A549 (cell line): ENCODE measurements at regions of chr1 and their contacts with region 1.

Region 1: GRCh38 chr1:245045087-245045881 is 109.5 kb upstream of the KIF26B start:
- DNase-seq: peak in 1 of 2 experiments; percentile 85
- ATAC-seq: peak; percentile 81 to 93
- H3K4me3 ChIP-seq: no peak overlapping the region
- H3K27ac ChIP-seq: peak overlapping the region in 1 of 2 experiments; percentile 18; a peak in 2 of 6 replicates
- H3K4me1 ChIP-seq: peaks cover 22% of the 10 kb centered on the region
- CTCF ChIP-seq: no peak
- EP300 ChIP-seq: no peak
- POLR2A ChIP-seq: no peak
- RAD21 ChIP-seq: no peak

Region 2: GRCh38 chr1:244599937-244600350 is 445.3 kb before region 1 on chr1:
- CTCF ChIA-PET with region 1: interaction called, 20 read pairs
- POLR2A ChIA-PET with region 1: interaction called, 3 read pairs
- DNase-seq: peak; percentile 72 to 82
- ATAC-seq: peak; percentile 88 to 92
- H3K4me3 ChIP-seq: peak overlapping the region; percentile 12; the same call in 1 of the 3 replicates
- H3K27ac ChIP-seq: peak overlapping the region in 1 of 2 experiments; percentile 11; a peak in 1 of 6 replicates
- H3K4me1 ChIP-seq: peaks cover 12% of the 10 kb centered on the region
- CTCF ChIP-seq: no peak
- EP300 ChIP-seq: no peak
- POLR2A ChIP-seq: no peak
- RAD21 ChIP-seq: no peak

Region 3: DNA sequence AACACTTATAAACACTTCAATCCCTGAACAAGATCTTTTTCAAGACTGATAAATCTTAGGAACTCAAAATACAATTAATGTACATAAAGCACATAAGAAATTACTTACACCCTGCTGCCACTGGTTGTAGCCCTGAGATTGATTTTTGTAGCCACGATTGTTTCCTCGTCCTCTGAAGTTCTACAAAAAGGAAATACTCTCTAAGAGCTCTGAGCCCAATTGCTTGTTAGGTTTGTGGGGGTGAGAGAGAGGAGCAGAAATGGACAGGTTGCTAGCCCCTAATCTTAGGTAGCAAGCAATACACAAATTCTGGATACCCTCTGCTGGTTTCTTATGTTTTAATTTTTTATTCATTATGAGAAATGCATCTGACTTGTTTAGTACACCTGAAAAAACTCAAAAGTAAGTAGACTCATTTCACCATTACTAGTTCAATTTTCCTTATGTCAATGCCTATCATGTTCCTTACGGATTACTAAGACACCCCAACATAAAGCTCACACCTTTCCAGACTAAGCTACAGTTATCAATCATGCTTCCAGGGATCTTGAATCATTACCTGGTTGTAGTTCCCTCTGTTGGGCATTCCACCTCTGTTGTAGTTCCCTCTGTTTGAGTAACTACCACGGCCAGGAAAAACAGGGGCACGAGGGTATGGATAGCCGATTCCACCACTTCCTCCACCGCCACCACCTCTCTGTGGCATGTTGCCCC is 190.3 kb before region 1 on chr1:
- CTCF ChIA-PET with region 1: interaction called, 19 read pairs
- POLR2A ChIA-PET with region 1: interaction called, 4 read pairs
- DNase-seq: no peak
- ATAC-seq: peak in 1 of 2 experiments; percentile 10; a peak in 1 of 6 replicates
- H3K4me3 ChIP-seq: no peak overlapping the region
- H3K27ac ChIP-seq: no peak overlapping the region
- H3K4me1 ChIP-seq: peaks cover 52% of the 10 kb centered on the region
- CTCF ChIP-seq: no peak
- EP300 ChIP-seq: no peak
- POLR2A ChIP-seq: no peak
- RAD21 ChIP-seq: no peak

Region 4: GRCh38 chr1:244897476-244898254 is 147.6 kb before region 1 on chr1:
- CTCF ChIA-PET with region 1: interaction called, 11 read pairs
- POLR2A ChIA-PET with region 1: no interaction called
- DNase-seq: no peak
- ATAC-seq: no peak
- H3K4me3 ChIP-seq: no peak overlapping the region
- H3K27ac ChIP-seq: no peak overlapping the region; a peak in 1 of 6 replicates
- H3K4me1 ChIP-seq: peaks cover 13% of the 10 kb centered on the region
- CTCF ChIP-seq: no peak
- EP300 ChIP-seq: no peak
- POLR2A ChIP-seq: no peak
- RAD21 ChIP-seq: no peak

Region 5: GRCh38 chr1:245019910-245020486 is 25.3 kb before region 1 on chr1:
- CTCF ChIA-PET with region 1: interaction called, 14 read pairs
- POLR2A ChIA-PET with region 1: no interaction called
- DNase-seq: no peak
- ATAC-seq: 0 out of 6 replicates have a peak, but pooled peaks of 1 of the 2 experiments have one; percentile 39
- H3K4me3 ChIP-seq: no peak overlapping the region
- H3K27ac ChIP-seq: no peak overlapping the region
- H3K4me1 ChIP-seq: no peaks in the 10 kb centered on the region
- CTCF ChIP-seq: no peak
- EP300 ChIP-seq: no peak
- POLR2A ChIP-seq: no peak
- RAD21 ChIP-seq: no peak

Region 6: GRCh38 chr1:245060684-245061374 is 15.5 kb after region 1 on chr1:
- CTCF ChIA-PET with region 1: interaction called, 25 read pairs
- POLR2A ChIA-PET with region 1: no interaction called
- DNase-seq: peak in 1 of 2 experiments; percentile 46
- ATAC-seq: peak; percentile 24 to 67; a peak in 4 of 6 replicates
- H3K4me3 ChIP-seq: no peak overlapping the region
- H3K27ac ChIP-seq: no peak overlapping the region
- H3K4me1 ChIP-seq: peaks cover 14% of the 10 kb centered on the region; the same call in 2 of the 3 replicates
- CTCF ChIP-seq: no peak
- EP300 ChIP-seq: no peak
- POLR2A ChIP-seq: no peak
- RAD21 ChIP-seq: no peak